Natural killer cell (primary cell): ENCODE measurements at regions of chr1 and their contacts with region 1.

Region 1: GRCh38 chr1:161216945-161217712 is 2.0 kb downstream of the FCER1G start:
- DNase-seq: peak; percentile 42 to 53
- ATAC-seq: peak; percentile 72 to 86 (median 80)
- H3K4me3 ChIP-seq: peak overlapping the region; percentile 76
- H3K4me3 Mint-ChIP-seq: peak overlapping the region; percentile 95
- H3K27ac ChIP-seq: peak overlapping the region; percentile 86
- H3K27ac Mint-ChIP-seq: peak overlapping the region; percentile 96 to 99
- H3K4me1 ChIP-seq: peaks cover 34% of the 10 kb centered on the region
- H3K4me1 Mint-ChIP-seq: peaks cover 56 to 70% of the 10 kb centered on the region in 2 donors
- H3K27me3 ChIP-seq: no peaks in the 10 kb centered on the region
- H3K27me3 Mint-ChIP-seq: no peaks in the 10 kb centered on the region
- CTCF ChIP-seq: no peak

Region 2: DNA sequence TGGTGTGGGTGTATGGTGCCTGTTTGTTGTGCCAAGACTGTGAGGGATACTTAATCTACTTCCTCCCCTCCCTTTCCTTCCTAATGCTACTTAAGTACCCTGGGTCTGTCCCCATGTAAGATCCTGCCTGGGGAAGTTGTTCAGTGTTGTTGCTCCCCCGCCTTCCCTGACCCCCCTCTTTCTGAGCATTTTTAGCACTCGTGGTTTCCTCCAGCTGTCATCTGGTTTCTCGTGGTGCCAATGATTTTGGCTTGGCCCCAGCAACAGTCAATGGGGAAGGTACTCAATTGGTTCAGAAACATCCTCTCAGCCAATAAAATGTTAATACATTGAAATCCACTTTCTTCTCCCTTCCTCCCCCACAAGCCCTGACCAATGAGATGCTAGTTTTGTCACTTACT is 31.8 kb before region 1 on chr1:
- intact Hi-C with region 1: loop called (anchors 2 kb)
- DNase-seq: peak; percentile 60 to 93
- ATAC-seq: peak; percentile 69 to 86 (median 86)
- H3K4me3 ChIP-seq: no peak overlapping the region
- H3K4me3 Mint-ChIP-seq: peak overlapping the region; percentile 75
- H3K27ac ChIP-seq: peak overlapping the region; percentile 83
- H3K27ac Mint-ChIP-seq: peak overlapping the region; percentile 95 to 97
- H3K4me1 ChIP-seq: peaks cover 72% of the 10 kb centered on the region
- H3K4me1 Mint-ChIP-seq: peaks cover 79 to 80% of the 10 kb centered on the region in 2 donors
- H3K27me3 ChIP-seq: no peaks in the 10 kb centered on the region
- H3K27me3 Mint-ChIP-seq: no peaks in the 10 kb centered on the region
- CTCF ChIP-seq: no peak